ENCODE measurements at regions of chr10 and their contacts with region 1.

Region 1: GRCh38 chr10:63720072-63720537 is 198.9 kb downstream of the REEP3 start:
- DNase-seq: peak; percentile 72
- H3K4me3 ChIP-seq: no peak overlapping the region
- H3K27ac ChIP-seq: no peak overlapping the region
- H3K4me1 ChIP-seq: no peaks in the 10 kb centered on the region
- CTCF ChIP-seq: peak; percentile 99

Region 2: GRCh38 chr10:63166742-63167258 is 553.3 kb before region 1 on chr10:
- CTCF ChIA-PET with region 1: interaction called, 11 read pairs
- POLR2A ChIA-PET with region 1: interaction called, 5 read pairs
- intact Hi-C with region 1: loop called (anchors 1 kb)
- DNase-seq: peak; percentile 78
- H3K4me3 ChIP-seq: no peak overlapping the region
- H3K27ac ChIP-seq: no peak overlapping the region
- H3K4me1 ChIP-seq: no peaks in the 10 kb centered on the region
- CTCF ChIP-seq: peak; percentile 94

Region 3: DNA sequence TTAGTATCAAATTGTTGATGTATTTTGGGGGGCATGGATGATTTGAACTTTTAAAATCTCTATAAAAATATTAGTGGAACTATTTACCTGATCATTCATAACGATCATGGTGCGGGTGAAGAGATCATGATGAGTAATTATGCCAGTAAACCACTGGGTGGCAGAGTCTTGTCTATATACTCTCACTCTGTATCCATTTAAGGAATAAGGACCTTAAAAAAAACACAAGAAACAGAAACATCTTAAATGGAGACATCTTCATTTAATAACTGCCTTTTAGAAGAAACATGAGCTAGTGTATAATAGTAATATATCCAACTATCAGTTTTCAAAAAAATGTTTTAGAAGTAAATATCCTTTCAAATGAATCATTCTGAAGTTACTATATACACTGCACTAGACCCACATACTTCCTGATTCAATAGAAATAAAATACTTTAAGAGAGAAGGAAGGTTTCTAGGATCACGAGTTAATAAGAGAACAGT is 502.9 kb before region 1 on chr10:
- CTCF ChIA-PET with region 1: no interaction called
- POLR2A ChIA-PET with region 1: no interaction called
- intact Hi-C with region 1: loop called (anchors 2 kb)
- DNase-seq: peak; percentile 73
- H3K4me3 ChIP-seq: no peak overlapping the region
- H3K27ac ChIP-seq: no peak overlapping the region
- H3K4me1 ChIP-seq: peaks cover 44% of the 10 kb centered on the region
- CTCF ChIP-seq: peak; percentile 93

Region 4: DNA sequence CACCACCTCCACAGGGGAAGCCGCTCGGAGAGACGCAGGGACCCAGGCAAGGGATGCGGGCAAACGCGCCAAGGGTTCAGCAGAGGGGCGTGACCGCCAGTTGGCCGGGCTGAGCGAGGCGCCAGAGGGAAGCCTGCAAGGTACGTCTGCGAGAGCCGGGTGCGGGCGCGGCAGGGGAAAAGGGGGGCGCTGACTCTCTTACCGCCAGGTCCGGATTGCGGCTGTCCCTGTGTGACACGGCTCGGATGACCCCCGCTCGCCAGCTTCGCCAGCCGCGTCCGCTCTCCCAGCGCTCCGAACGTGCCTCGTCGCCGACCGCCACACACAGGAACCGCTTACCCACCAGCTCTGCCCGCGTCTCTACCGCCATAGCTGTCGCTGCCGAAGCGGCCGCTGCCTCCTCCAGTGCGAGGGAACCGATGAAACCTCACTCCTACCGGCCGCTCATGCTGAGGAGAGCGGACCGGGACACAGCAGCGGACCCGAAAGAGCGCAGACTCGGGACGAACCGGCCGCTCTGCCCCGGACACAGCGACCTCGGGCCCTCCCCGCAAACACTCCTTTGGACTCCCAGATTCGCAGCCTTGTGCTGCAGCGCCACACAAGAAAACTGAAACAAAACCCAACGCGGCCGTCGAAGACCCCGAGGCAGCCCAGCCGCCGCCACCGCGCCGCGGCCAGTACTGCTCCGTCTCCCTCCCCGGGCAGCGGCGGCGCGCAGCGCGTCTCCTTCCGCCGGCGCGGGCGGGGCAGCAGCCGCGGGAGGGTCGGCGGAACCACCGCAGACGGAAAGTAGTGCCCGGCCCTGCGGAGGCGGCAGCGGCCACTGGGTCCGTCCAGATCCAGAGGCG is 254.6 kb before region 1 on chr10 and contains the start of gene JMJD1C:
- CTCF ChIA-PET with region 1: no interaction called
- POLR2A ChIA-PET with region 1: no interaction called
- intact Hi-C with region 1: loop called (anchors 10 kb)
- DNase-seq: peak; percentile 61
- H3K4me3 ChIP-seq: peak within 1 kb of the TSS; percentile 73
- H3K27ac ChIP-seq: no peak within 1 kb of the TSS
- H3K4me1 ChIP-seq: peaks cover 7% of the 10 kb centered on the region
- CTCF ChIP-seq: peak; percentile 34; the same call in 1 of the 2 replicates
- total RNA-seq, gene JMJD1C: 99.2 and 104 TPM in 2 replicates

Region 5: DNA sequence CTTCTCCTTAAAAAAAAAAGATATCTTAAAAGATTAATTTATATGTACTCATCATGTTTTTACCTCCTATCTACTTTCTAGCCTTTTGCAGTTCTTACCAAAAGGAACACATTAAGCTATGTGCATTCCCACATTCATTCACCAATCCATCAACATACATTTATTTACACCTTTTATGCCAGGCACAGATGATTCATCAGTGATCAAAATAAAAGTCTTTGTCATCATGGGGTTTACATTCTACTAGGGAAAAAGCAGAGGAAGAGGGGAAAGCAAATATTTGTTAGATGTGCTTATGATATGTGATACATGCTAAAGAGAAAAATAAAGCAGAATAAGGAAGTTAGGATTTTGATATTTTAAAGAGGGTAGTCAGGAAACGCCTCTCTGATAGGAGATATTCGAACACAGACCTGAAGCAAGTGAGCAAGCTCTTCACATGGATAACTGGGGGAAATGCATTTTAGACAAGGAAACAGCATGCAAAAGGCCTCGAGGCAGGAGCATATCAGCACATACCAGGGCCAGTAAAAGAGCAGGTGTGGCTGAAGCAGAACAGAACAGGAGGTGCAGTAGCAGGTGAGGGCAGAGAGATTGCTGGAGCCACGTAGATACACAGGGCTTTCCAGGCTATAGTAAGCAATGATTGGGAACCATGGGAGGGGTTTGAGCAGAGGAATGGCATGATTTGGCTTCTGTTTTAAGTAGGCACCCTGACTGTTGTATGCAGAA is 131.5 kb before region 1 on chr10:
- CTCF ChIA-PET with region 1: no interaction called
- POLR2A ChIA-PET with region 1: no interaction called
- intact Hi-C with region 1: no loop called
- DNase-seq: no peak
- H3K4me3 ChIP-seq: no peak overlapping the region
- H3K27ac ChIP-seq: no peak overlapping the region
- H3K4me1 ChIP-seq: no peaks in the 10 kb centered on the region
- CTCF ChIP-seq: no peak

Measured in OCI-LY7 (cell line).